ENCODE measurements at regions of chr15 and their contacts with region 1.

Region 1: GRCh38 chr15:88834211-88834812 is 31.1 kb downstream of the ACAN start:
- DNase-seq: no peak
- CTCF ChIP-seq: peak; percentile 69

Region 2: GRCh38 chr15:88476635-88477060 is 357.7 kb before region 1 on chr15:
- in situ Hi-C with region 1: loop called (anchors 25 kb)
- DNase-seq: no peak
- CTCF ChIP-seq: peak; percentile 44